Spleen (tissue), 13 donors: ENCODE measurements at regions of chr6 and their contacts with region 1.

Region 1: GRCh38 chr6:137707590-137708360 is 159.3 kb upstream of the TNFAIP3 start:
- DNase-seq: peak; percentile 80
- H3K4me3 ChIP-seq: peak overlapping the region in 3 of 8 donors; percentile 8 to 36 (median 10)
- H3K27ac ChIP-seq: peak overlapping the region in 7 of 8 donors; percentile 9 to 77 (median 43)
- H3K4me1 ChIP-seq: peaks cover 12 to 56% (median 33%) of the 10 kb centered on the region in 6 donors
- H3K27me3 ChIP-seq: no peaks in the 10 kb centered on the region
- CTCF ChIP-seq: peak; percentile 41 to 88 (median 74)
- POLR2A ChIP-seq: no peak

Region 2: DNA sequence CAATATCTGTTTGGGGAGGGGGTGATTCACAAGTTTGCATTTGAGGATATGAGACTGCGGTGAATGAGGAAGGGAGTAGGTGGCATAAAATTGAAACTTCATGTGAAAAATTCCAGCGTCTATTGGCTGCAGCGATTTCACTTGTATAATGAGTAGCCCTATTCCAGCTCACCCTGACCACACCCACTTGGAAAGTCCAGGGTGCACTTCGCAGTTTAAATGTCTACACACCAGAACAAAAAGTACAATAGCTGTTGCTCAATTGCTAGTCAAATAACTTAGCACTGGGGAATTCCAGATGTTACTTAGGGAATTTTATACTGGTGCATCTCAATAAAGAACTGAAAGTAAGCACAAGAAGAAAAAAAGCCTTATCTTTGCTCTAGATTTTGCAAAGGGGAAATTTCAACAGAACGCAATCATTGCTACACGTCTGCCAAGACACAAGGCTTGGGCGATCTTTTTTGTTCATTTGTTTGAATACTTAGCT is 165.5 kb after region 1 on chr6:
- intact Hi-C with region 1: loop called (anchors 5 kb)
- DNase-seq: no peak
- H3K4me3 ChIP-seq: peak overlapping the region in 6 of 8 donors; percentile 1 to 97 (median 85)
- H3K27ac ChIP-seq: peak overlapping the region; percentile 53 to 99 (median 84)
- H3K4me1 ChIP-seq: peaks cover 47 to 100% (median 79%) of the 10 kb centered on the region in 6 donors
- H3K27me3 ChIP-seq: no peaks in the 10 kb centered on the region
- CTCF ChIP-seq: no peak
- POLR2A ChIP-seq: no peak